Motor neuron (in vitro differentiated cells): ENCODE measurements at regions of chr16 and their contacts with region 1.

Region 1: DNA sequence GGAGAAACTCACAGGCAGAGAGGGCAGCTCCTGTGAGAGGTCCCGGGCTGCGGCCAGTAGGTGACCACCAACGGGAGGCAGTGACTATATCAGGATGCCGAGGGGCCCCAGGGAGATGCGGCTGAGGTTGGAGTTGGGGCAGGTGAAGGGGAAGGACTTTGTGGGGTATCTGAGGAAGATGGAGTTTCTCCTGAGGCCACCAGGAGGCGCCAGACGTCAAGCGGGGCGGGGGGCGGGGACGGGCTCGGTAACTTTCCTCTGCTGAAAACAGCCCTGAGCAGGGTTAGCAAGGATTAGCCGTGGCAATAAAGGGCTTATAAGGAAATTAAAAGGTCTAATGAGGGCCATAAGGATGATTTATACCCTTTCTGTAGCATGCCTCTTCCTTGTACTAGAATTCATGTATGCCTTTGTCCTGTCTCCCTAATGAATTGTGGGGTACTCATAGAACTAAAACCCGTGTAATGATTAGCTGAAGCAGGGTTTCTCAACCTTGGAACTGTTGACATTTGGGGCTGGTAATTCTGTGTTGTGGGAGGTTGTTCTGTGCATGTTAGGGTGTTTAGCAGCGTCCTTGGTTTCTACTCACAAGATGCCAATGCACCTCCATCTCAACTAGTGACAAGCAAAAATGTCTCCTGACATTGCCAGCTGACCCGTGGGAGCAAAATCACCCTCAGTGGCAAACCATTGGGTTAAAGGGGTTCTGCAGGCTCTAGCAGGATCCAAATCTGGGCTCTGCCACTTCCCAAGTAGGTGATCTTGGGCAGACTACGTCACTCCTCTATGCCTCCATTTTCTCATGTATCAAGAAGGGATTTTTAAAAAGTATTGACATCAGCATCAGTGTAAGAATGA is 74.8 kb upstream of the GRIN2A start:
- ATAC-seq: peak in 7 of 8 experiments; percentile 47 to 94 (median 81)
- H3K4me3 ChIP-seq: no peak overlapping the region
- H3K27ac ChIP-seq: no peak overlapping the region
- H3K4me1 ChIP-seq: peaks cover 5 to 25% of the 10 kb centered on the region in 2 donors

Region 2: GRCh38 chr16:10368969-10369551 is 112.0 kb after region 1 on chr16:
- in situ Hi-C with region 1: loop called in 1 of 9 experiments (anchors 25 kb)
- ATAC-seq: no peak
- H3K4me3 ChIP-seq: no peak overlapping the region
- H3K27ac ChIP-seq: no peak overlapping the region
- H3K4me1 ChIP-seq: peaks cover 0 to 2% of the 10 kb centered on the region in 2 donors

Region 3: DNA sequence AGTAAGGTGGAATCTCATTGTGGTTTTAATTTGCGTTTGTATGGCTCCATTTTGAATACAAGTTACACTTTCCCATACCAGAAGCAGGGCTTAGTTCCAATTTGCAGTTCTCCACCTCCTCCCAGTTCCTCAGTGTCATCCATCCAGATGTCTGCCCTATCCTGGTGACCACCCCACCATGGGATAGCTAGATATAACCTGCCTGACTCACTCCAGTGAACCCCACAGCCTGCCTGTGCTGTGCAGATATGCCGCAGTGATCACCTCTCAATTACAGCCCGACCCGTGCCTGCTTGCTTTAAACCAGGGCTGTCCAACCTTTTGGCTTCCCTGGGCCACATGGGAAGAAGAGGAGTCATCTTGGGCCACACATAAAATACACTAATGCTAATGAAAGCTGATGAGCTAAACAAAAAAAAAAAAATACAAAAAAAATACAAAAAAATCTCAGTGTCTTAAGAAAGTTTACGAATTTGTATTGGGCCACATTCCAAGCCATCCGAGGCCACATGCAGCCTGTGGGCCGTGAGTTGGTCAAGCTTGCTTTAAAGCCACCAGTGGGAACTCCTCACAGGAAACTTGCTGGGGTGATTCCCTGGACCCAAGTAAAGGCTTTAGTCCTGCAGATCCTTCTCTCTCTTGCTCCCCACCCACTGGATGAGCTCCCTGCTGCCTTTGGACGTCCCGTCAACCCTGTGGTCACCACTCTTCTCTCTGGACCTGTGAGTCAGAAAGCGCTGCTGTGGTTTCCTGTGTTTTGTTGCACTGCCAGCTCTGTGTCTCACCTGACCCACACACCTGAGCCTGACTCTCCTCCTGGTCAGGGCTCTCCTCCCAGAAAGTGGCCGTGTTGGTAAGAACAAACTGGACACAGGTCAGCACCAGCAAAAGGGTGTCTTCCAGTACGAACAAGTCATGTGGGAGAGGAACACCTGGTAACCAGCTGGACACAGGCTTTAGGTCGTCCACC is 240.4 kb after region 1 on chr16:
- in situ Hi-C with region 1: loop called in 3 of 9 experiments (anchors 10 to 25 kb)
- ATAC-seq: no peak
- H3K4me3 ChIP-seq: no peak overlapping the region
- H3K27ac ChIP-seq: no peak overlapping the region
- H3K4me1 ChIP-seq: no peaks in the 10 kb centered on the region

Region 4: GRCh38 chr16:10737068-10737625 is 480.1 kb after region 1 on chr16:
- in situ Hi-C with region 1: loop called in 2 of 9 experiments (anchors 10 kb)
- ATAC-seq: peak; percentile 26 to 84 (median 72)
- H3K4me3 ChIP-seq: no peak overlapping the region
- H3K27ac ChIP-seq: no peak overlapping the region
- H3K4me1 ChIP-seq: peaks cover 0 to 2% of the 10 kb centered on the region in 2 donors